ENCODE measurements at regions of chr4 and their contacts with region 1.

Region 1: GRCh38 chr4:119628308-119629141 is at the start of gene PDE5A:
- DNase-seq: peak; percentile 80
- ATAC-seq: peak; percentile 88
- H3K4me3 Mint-ChIP-seq: peak within 1 kb of the TSS; percentile 77
- H3K27ac Mint-ChIP-seq: no peak within 1 kb of the TSS
- H3K4me1 Mint-ChIP-seq: peaks cover 24% of the 10 kb centered on the region
- H3K27me3 Mint-ChIP-seq: peaks cover 37% of the 10 kb centered on the region
- total RNA-seq, gene PDE5A: 0.13 TPM in 1 of 2 experiments, not detected in the other

Region 2: DNA sequence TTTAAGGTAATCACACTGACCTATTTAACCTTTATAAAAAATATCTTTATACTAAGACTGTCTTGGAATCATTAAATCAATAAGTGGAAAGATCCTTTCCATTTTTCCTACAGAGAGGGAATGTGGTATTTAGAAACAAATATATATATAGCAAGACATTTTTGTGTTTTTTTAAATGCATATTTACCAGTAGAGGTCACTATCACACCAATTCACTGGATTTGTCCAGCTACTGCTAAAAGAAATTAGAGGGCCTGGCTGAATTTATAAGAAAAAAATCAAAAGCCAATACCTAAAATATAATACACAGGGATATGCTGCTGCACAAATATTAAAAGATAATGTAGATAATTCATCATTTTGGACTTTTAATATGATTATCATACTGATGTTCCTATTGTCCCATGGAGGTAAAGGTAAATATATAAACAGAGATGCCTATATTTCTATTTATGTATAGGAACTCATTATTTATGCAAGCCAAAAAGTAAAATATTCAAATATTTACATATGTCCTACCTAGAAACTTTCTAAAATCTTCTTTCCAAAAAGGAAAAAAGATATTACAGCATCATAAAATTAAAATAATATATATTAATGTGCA is 69.4 kb before region 1 on chr4:
- CTCF ChIA-PET with region 1: interaction called, 20 read pairs
- POLR2A ChIA-PET with region 1: no interaction called
- DNase-seq: no peak
- ATAC-seq: no peak
- H3K4me3 Mint-ChIP-seq: no peak overlapping the region
- H3K27ac Mint-ChIP-seq: no peak overlapping the region
- H3K4me1 Mint-ChIP-seq: no peaks in the 10 kb centered on the region
- H3K27me3 Mint-ChIP-seq: no peaks in the 10 kb centered on the region

Region 3: GRCh38 chr4:119615068-119615719 is 13.3 kb before region 1 on chr4:
- CTCF ChIA-PET with region 1: interaction called, 13 read pairs
- POLR2A ChIA-PET with region 1: no interaction called
- DNase-seq: no peak
- ATAC-seq: no peak
- H3K4me3 Mint-ChIP-seq: no peak overlapping the region
- H3K27ac Mint-ChIP-seq: no peak overlapping the region
- H3K4me1 Mint-ChIP-seq: no peaks in the 10 kb centered on the region
- H3K27me3 Mint-ChIP-seq: peaks cover 7% of the 10 kb centered on the region

Region 4: DNA sequence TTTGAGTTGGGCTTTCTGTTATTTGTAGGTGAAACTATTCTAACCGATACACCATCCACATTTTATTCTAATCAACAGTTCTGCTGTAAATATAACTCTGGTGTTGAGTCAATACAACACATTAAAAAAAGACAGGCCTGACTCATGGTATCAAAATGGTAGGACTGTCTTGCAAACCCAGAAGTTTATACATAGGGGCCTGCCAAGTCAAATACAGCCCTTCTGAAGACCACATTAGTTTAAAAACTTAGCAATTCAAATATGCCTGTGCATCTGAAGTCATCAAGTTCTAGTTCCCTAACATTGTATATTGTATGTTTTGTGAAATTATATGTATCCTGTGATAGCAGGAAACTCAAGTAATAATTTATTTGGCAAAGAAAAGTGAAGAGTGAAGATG is 24.5 kb after region 1 on chr4:
- CTCF ChIA-PET with region 1: interaction called, 10 read pairs
- POLR2A ChIA-PET with region 1: no interaction called
- DNase-seq: no peak
- ATAC-seq: no peak
- H3K4me3 Mint-ChIP-seq: no peak overlapping the region
- H3K27ac Mint-ChIP-seq: no peak overlapping the region
- H3K4me1 Mint-ChIP-seq: no peaks in the 10 kb centered on the region
- H3K27me3 Mint-ChIP-seq: peaks cover 3% of the 10 kb centered on the region

Region 5: DNA sequence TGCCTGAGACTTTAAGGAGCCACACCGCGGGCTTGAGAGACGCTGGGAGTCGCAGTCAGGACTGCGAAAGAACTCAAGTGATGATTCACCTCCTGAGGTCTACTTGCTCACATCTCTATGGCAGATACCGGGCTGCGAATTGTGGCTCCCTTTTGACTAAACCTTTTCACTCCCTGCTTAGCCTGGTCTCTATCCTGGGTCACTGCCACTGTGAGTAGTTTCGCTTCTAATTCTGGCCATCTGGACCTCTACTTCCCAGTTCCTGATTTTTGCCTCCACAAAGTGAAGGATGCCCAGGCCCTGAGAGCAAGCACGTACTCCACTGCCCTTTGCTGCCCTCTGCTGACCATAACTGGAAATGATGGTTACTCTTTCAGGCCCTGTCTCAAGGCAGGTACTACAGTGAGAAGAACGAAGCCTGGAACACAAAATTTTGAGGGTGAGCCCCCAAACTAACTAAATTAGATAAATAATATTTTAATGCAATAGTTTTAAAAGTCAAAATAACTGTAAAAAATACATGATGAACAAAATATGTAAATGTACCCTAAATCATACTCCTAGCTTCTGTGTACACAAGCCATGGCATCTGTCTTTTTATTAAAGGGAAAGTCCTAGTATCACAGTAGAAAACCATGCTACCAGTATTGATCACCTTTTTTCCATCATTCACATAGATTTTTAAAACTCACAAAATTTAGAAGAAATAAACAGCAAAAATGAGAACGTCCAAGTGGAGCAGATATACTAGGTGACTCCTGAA is 421.4 kb after region 1 on chr4:
- CTCF ChIA-PET with region 1: interaction called, 23 read pairs
- POLR2A ChIA-PET with region 1: no interaction called
- DNase-seq: peak; percentile 84
- ATAC-seq: peak; percentile 97
- H3K4me3 Mint-ChIP-seq: no peak overlapping the region
- H3K27ac Mint-ChIP-seq: no peak overlapping the region
- H3K4me1 Mint-ChIP-seq: peaks cover 2% of the 10 kb centered on the region
- H3K27me3 Mint-ChIP-seq: no peaks in the 10 kb centered on the region

Region 6: GRCh38 chr4:120056246-120056645 is 427.7 kb after region 1 on chr4:
- CTCF ChIA-PET with region 1: interaction called, 23 read pairs
- POLR2A ChIA-PET with region 1: no interaction called
- DNase-seq: no peak
- ATAC-seq: no peak
- H3K4me3 Mint-ChIP-seq: no peak overlapping the region
- H3K27ac Mint-ChIP-seq: no peak overlapping the region
- H3K4me1 Mint-ChIP-seq: peaks cover 10% of the 10 kb centered on the region
- H3K27me3 Mint-ChIP-seq: no peaks in the 10 kb centered on the region